ENCODE measurements at regions of chr6 and their contacts with region 1.

Region 1: DNA sequence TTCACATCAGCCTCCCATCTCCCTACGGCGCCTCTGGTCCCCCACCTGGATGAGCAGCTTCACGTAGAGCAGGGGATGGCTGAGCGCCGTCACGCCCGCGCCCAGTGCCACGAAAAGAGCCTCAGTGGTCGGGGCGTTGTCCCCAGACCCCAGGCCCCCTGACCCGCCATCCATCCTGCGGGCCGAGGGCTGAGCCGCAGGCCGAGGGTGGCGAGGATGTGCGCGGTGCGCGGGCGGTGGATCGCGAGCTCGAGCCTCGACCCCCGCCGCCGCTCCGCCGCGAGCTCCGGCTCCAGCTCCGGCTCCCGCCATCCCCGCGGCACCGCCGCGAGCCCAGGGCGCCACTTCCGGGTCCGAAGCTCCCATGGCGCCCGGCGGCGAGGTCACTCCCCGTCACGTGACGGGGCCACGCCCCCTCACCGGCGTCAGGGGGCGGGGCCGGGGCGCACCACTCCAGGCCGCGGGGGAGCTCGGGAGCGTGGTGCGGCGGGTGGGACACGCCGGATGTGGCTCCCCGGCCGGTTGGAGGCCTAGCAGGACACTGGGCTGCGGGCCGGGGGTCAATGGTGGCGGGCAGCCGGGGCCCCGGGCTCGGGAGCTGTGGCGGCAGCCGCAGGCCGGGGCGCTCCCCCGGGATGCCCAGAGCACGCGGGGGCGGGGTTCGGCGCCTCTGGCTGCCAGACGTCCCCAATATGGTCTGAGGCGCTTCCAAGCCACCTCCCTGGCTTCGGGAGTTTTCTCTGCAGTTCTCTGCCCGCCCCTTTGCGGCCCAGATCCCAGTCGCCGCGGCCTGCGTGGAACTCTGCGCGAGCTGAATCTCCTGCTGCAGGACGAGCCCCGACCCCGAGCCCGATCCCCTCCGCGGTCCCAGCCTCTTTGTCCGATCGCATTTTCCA is at the start of gene MTCH1:
- DNase-seq: peak; percentile 79 to 97 (median 90)
- ATAC-seq: peak; percentile 85 to 94
- H3K4me3 Mint-ChIP-seq: peak within 1 kb of the TSS in 9 of 10 donors; percentile 92 to 100 (median 99)
- H3K27ac Mint-ChIP-seq: peak within 1 kb of the TSS; percentile 94 to 99 (median 97)
- H3K4me1 Mint-ChIP-seq: peaks cover 19 to 30% (median 25%) of the 10 kb centered on the region in 4 donors
- H3K27me3 Mint-ChIP-seq: no peaks in the 10 kb centered on the region
- polyA plus RNA-seq, gene MTCH1: 63.2 to 78.3 (median 74.8) TPM

Region 2: DNA sequence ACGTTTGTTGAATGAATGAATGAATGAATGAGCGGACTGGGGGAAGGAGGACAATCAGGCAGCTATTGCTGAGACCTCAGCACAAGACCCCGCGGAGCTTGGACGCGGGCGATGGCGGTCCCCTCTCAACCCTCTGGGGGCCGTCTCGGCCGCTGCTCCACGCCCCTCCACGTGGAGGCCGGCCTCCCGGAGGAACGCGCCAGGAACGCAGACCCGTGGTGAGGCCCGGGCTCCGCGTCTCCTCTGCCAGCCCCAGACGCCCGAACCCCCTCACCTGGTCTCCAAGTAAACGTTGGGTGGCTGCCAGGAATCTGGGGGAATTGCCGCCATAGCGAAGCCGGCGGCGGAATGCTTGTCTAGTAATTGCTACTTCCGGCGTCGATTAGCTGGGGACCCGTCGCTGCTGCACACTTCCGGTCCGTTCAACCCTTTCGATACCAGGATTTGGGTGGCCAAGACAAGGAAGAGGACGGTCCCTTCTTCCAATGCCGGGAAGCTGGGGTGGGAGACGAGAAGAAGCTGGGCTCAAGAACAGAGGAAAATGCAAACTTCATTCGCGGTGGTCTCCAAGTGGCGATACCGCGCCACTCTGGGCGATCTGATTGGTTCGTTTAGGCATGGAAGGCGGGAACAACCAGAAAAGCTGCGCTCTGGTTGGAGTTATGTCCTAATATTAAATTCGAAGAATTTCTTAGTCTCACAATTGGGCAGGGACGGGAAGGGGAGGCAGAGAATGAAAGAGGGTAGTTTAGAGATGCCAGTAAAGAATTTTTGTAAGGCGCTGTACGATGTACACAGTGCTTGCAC is 111.4 kb before region 1 on chr6 and contains the start of gene PPIL1:
- POLR2A ChIA-PET with region 1: interaction called, 20 read pairs
- DNase-seq: peak; percentile 74 to 98 (median 87)
- ATAC-seq: peak; percentile 88 to 91
- H3K4me3 Mint-ChIP-seq: peak within 1 kb of the TSS; percentile 86 to 99 (median 98)
- H3K27ac Mint-ChIP-seq: peak within 1 kb of the TSS; percentile 94 to 100 (median 99)
- H3K4me1 Mint-ChIP-seq: peaks cover 16 to 43% (median 42%) of the 10 kb centered on the region in 4 donors
- H3K27me3 Mint-ChIP-seq: peaks cover 3 to 14% (median 7%) of the 10 kb centered on the region in 5 donors
- polyA plus RNA-seq, gene PPIL1: 27.1 to 34.2 (median 27.6) TPM

Region 3: GRCh38 chr6:36885461-36886401 is 100.3 kb before region 1 on chr6 and contains the start of gene C6orf89:
- POLR2A ChIA-PET with region 1: interaction called, 30 read pairs
- DNase-seq: peak; percentile 92 to 99 (median 97)
- ATAC-seq: peak; percentile 96 to 98
- H3K4me3 Mint-ChIP-seq: peak within 1 kb of the TSS; percentile 79 to 93 (median 89)
- H3K27ac Mint-ChIP-seq: peak within 1 kb of the TSS; percentile 90 to 98 (median 96)
- H3K4me1 Mint-ChIP-seq: peaks cover 17 to 44% (median 35%) of the 10 kb centered on the region in 4 donors
- H3K27me3 Mint-ChIP-seq: no peaks in the 10 kb centered on the region
- polyA plus RNA-seq, gene C6orf89: 37.4 to 44.4 (median 40.1) TPM

Region 4: GRCh38 chr6:36962874-36963273 is 23.2 kb before region 1 on chr6:
- POLR2A ChIA-PET with region 1: interaction called, 11 read pairs
- DNase-seq: peak in 9 of 10 donors; percentile 56 to 89 (median 68)
- ATAC-seq: peak; percentile 66 to 75
- H3K4me3 Mint-ChIP-seq: peak overlapping the region; percentile 25 to 79 (median 66)
- H3K27ac Mint-ChIP-seq: peak overlapping the region; percentile 60 to 96 (median 85)
- H3K4me1 Mint-ChIP-seq: peaks cover 18 to 42% (median 40%) of the 10 kb centered on the region in 4 donors
- H3K27me3 Mint-ChIP-seq: no peaks in the 10 kb centered on the region

Region 5: DNA sequence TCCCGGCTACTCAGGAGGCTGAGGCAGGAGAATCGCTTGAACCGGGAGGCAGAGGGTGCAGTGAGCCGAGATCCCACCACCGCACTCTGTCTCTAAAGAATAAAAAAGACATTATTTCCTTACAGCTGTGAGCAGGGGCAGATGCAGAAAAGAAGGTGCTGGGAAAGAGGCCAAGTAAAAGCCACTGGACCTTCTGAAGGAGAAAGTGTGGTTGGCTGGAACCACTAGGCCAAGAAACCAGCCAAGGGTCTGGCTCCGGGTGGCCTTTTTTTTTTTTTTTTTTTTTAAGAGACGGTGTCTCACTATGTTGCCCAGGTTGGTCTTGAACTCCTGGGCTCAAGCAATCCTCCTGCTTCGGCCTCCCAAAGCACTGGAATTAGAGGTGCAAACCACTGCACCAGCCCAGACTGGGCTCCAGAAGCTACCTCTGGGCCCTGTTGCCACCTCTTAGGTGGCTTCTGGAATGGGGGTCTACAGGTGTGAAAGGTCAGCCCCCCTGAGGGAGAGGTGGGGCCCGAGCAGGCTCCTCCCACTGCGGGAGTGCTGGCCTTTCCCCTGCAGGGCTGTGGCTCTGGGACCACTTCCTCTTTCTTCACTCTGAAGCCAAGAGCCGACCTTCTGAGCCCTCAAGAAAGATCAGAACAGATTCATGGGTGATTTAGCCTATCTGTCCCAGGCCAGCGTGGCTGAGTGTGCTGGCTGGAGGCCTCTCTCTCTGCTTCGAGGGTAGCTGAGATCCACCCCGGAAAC is 19.2 kb after region 1 on chr6 and contains the start of gene FGD2:
- POLR2A ChIA-PET with region 1: interaction called, 13 read pairs
- DNase-seq: peak in 2 of 10 donors; percentile 24 to 65
- ATAC-seq: peak in 1 of 2 donors; percentile 59
- H3K4me3 Mint-ChIP-seq: peak within 1 kb of the TSS in 5 of 10 donors; percentile 12 to 91 (median 36)
- H3K27ac Mint-ChIP-seq: peak within 1 kb of the TSS in 5 of 10 donors; percentile 15 to 83 (median 39)
- H3K4me1 Mint-ChIP-seq: peaks cover 10 to 61% (median 16%) of the 10 kb centered on the region in 4 donors
- H3K27me3 Mint-ChIP-seq: no peaks in the 10 kb centered on the region
- polyA plus RNA-seq, gene FGD2: 0.25 TPM in 1 of 3 donors, not detected in the others

Region 6: DNA sequence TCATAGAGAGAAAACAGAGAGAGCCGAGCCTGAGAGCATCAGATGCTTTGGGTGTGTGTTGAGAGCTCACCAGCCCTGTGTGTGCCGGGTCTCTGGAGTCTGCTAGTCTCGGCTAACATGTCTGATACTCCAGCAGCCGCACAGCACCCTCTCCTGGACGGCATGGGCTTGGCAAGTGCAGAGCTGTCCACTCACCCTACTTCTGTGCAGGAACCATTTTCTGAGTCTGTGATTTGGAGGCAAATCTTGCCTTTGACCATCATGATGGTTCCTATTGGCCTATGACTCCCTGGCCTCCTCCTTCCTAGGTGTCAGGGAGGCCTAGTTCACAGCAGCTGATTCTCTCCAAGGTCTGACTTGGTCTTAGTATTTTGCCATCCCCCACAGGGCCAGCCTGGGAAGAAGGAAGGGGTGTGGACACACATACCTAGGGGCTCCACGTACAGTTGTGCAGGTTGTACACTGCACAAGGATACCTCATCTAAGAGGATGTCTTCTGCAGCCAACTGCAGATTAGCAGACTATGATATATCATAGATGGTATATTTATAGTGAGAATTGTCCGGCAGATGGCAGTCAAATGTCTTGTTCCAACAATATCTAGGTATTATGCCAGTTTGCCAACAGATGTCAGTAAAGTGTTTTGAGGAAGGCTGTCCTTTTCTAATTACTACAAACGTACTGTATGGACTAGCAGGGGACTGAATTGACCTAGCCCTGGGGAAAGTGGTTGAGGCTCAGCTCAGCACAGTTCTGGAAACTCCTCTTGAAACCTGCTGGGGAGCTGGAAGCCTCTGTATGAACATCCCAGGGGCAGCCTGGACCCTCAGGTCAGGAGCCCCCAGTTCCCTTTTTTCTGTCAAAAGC is 32.4 kb after region 1 on chr6:
- POLR2A ChIA-PET with region 1: interaction called, 16 read pairs
- DNase-seq: peak; percentile 68 to 92 (median 82)
- ATAC-seq: peak; percentile 93 to 95
- H3K4me3 Mint-ChIP-seq: no peak overlapping the region
- H3K27ac Mint-ChIP-seq: peak overlapping the region; percentile 17 to 92 (median 76)
- H3K4me1 Mint-ChIP-seq: peaks cover 27 to 47% (median 42%) of the 10 kb centered on the region in 4 donors
- H3K27me3 Mint-ChIP-seq: no peaks in the 10 kb centered on the region

Region 7: GRCh38 chr6:37134606-37135191 is 148.6 kb after region 1 on chr6:
- POLR2A ChIA-PET with region 1: no interaction called
- DNase-seq: peak in 1 of 10 donors; percentile 19
- ATAC-seq: no peak
- H3K4me3 Mint-ChIP-seq: peak overlapping the region in 1 of 10 donors; percentile 55
- H3K27ac Mint-ChIP-seq: peak overlapping the region in 7 of 10 donors; percentile 7 to 97 (median 60)
- H3K4me1 Mint-ChIP-seq: peaks cover 0 to 20% (median 0%) of the 10 kb centered on the region in 4 donors
- H3K27me3 Mint-ChIP-seq: no peaks in the 10 kb centered on the region

Measured in naive thymus-derived CD8-positive, alpha-beta T cell (primary cell).